ENCODE measurements at regions of chr7 and their contacts with region 1.

Region 1: DNA sequence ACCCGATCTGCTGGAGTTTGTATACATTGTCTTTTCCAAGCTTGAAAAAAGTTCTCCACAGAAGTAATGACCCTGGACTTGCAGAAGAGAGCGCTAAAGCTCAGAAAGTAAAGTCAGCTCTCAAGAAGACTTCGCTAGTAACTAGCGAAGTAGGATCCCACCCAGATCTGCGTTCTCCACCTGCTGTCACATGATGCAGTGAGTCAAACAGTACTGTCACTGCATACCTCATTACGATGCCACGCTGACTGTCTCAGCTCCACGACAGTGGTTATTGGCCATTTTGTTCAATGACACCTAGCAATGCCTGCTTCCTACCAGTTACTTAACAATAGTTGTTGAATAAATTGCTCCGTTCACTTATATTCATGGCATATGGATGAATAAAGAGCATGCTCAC is 29.7 kb upstream of the SEC61G start:
- DNase-seq: peak; percentile 87
- H3K4me3 ChIP-seq: no peak overlapping the region
- H3K27ac ChIP-seq: peak overlapping the region; percentile 43
- H3K4me1 ChIP-seq: peaks cover 22% of the 10 kb centered on the region
- H3K27me3 ChIP-seq: no peaks in the 10 kb centered on the region
- CTCF ChIP-seq: peak; percentile 75 to 83

Region 2: GRCh38 chr7:54252256-54253035 is 536.2 kb before region 1 on chr7:
- CTCF ChIA-PET with region 1: no interaction called
- dilution Hi-C with region 1: no loop called
- in situ Hi-C with region 1: no loop called
- intact Hi-C with region 1: no loop called
- DNase-seq: peak; percentile 32
- H3K4me3 ChIP-seq: no peak overlapping the region
- H3K27ac ChIP-seq: no peak overlapping the region
- H3K4me1 ChIP-seq: no peaks in the 10 kb centered on the region
- H3K27me3 ChIP-seq: no peaks in the 10 kb centered on the region
- CTCF ChIP-seq: no peak

Region 3: DNA sequence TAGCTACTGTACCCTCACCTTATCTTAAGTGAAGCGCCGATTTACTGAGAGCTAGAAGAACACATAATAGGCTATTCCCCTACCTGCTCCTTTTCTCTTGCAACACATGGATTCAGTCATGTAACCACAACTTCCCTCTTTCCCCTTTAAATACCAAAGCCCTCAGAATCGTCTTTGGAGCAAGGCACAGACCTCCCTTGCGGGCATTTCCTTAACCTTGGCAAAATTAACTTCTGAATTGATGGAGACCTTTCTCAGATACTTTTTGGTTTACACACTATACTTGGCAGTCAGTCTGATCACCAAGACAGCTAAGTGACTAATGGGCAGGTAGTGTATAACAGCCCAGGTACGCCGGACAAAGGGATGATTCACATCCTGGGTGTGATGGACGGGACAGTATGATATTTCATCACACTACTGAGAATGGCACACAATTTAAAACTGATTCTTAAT is 43.0 kb after region 1 on chr7:
- CTCF ChIA-PET with region 1: interaction called, 4 read pairs
- dilution Hi-C with region 1: loop called (anchors 5 kb)
- in situ Hi-C with region 1: loop called in 1 of 2 experiments (anchors 5 kb)
- intact Hi-C with region 1: loop called (anchors 2 kb)
- DNase-seq: peak; percentile 99
- H3K4me3 ChIP-seq: peak overlapping the region in 2 of 3 experiments; percentile 23 to 32
- H3K27ac ChIP-seq: peak overlapping the region; percentile 94
- H3K4me1 ChIP-seq: peaks cover 28% of the 10 kb centered on the region
- H3K27me3 ChIP-seq: no peaks in the 10 kb centered on the region
- CTCF ChIP-seq: no peak

Region 4: DNA sequence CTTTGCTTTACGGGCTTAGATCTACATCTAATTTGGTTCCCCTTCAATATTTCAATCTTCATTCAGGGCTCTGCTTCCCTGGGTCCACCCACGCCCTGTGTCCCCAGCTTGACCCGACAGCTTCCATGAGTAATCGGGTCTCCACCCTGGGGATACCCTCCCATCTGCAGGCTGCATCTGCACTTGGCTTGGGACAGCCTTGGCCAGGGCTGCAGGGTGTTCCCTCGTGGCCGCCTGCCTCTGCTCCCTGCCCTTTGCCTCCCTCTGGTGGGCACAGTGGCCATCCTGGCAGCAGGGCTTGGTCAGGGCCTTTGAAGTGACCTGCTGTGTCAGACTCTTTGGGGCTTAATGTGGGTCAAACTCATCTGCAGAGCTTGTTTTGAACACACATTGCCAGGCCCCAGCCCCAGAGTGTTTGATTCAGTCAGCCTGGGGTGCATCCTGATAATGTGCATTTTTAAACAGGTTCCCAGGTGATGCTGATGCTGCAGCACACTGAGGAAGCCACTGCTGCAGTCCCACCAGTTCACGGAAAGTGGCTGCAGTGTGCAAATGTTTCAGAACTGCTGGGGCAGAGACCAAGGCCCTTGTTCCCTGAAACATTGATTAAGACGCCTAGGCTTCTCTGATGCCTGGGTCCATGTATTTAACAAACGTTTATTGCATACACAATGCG is 51.0 kb after region 1 on chr7:
- CTCF ChIA-PET with region 1: interaction called, 7 read pairs
- dilution Hi-C with region 1: loop called (anchors 5 kb)
- in situ Hi-C with region 1: loop called in 1 of 2 experiments (anchors 5 kb)
- intact Hi-C with region 1: loop called (anchors 1 kb)
- DNase-seq: peak; percentile 73
- H3K4me3 ChIP-seq: no peak overlapping the region
- H3K27ac ChIP-seq: no peak overlapping the region
- H3K4me1 ChIP-seq: peaks cover 17% of the 10 kb centered on the region
- H3K27me3 ChIP-seq: no peaks in the 10 kb centered on the region
- CTCF ChIP-seq: peak; percentile 82 to 89

Region 5: DNA sequence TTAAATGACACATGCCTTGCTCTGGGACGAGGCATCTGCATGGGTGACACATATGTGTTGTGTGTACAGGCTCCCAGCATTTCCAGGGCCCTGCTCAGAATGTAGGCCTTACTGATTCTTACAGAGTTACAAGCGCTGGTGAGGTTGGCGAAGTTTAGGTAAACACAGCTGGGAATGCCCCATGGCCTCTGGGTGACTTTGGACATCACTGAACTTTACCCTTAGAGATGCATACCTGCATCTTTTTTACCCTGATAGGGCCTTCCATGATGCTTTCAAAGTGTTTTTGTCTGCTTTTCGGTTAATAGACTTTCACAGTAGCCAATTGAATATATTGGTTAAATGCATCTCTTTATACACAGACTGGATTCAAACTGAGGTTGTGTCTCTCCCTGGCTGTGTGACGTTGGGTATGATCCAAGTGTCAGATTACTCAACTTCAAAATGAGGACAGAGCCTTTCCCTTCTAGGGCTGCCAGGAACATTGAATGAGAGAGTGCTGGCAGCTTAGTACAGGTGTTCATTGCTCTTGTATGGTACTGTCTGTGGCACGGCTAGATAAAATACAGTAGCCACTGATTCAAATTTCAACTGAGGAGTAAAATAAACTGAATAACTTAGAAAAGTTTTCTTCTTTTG is 259.7 kb after region 1 on chr7:
- CTCF ChIA-PET with region 1: no interaction called
- dilution Hi-C with region 1: no loop called
- in situ Hi-C with region 1: loop called in 1 of 2 experiments (anchors 5 kb)
- intact Hi-C with region 1: no loop called
- DNase-seq: no peak
- H3K4me3 ChIP-seq: no peak overlapping the region
- H3K27ac ChIP-seq: peak overlapping the region; percentile 31
- H3K4me1 ChIP-seq: peaks cover 65% of the 10 kb centered on the region
- H3K27me3 ChIP-seq: no peaks in the 10 kb centered on the region
- CTCF ChIP-seq: no peak

Region 6: DNA sequence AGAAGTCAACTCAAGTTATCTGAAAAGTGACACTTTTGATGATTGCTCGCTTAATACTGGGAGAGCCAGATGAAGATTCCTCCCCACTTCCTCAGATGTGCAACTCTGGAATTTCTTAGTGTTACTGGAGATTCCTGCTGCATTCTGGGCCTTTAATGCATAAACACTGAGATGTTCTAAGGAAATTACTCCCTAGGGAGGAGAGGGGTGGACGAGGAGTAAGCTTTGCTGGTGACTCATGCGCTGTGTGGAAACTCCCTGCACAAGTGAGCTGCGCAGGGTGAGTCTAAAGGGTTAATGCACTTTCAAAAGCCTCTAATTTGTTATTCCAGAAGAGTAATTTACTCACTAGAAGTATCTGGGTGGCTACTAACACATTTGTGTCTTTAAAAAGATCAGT is 276.4 kb after region 1 on chr7:
- CTCF ChIA-PET with region 1: no interaction called
- dilution Hi-C with region 1: no loop called
- in situ Hi-C with region 1: no loop called
- intact Hi-C with region 1: loop called (anchors 5 kb)
- DNase-seq: peak; percentile 89
- H3K4me3 ChIP-seq: no peak overlapping the region
- H3K27ac ChIP-seq: peak overlapping the region; percentile 97
- H3K4me1 ChIP-seq: peaks cover 71% of the 10 kb centered on the region
- H3K27me3 ChIP-seq: no peaks in the 10 kb centered on the region
- CTCF ChIP-seq: no peak

Region 7: GRCh38 chr7:55206235-55207029 is 417.8 kb after region 1 on chr7:
- CTCF ChIA-PET with region 1: no interaction called
- dilution Hi-C with region 1: no loop called
- in situ Hi-C with region 1: no loop called
- intact Hi-C with region 1: no loop called
- DNase-seq: no peak
- H3K4me3 ChIP-seq: no peak overlapping the region
- H3K27ac ChIP-seq: no peak overlapping the region
- H3K4me1 ChIP-seq: no peaks in the 10 kb centered on the region
- H3K27me3 ChIP-seq: no peaks in the 10 kb centered on the region
- CTCF ChIP-seq: no peak

Region 8: DNA sequence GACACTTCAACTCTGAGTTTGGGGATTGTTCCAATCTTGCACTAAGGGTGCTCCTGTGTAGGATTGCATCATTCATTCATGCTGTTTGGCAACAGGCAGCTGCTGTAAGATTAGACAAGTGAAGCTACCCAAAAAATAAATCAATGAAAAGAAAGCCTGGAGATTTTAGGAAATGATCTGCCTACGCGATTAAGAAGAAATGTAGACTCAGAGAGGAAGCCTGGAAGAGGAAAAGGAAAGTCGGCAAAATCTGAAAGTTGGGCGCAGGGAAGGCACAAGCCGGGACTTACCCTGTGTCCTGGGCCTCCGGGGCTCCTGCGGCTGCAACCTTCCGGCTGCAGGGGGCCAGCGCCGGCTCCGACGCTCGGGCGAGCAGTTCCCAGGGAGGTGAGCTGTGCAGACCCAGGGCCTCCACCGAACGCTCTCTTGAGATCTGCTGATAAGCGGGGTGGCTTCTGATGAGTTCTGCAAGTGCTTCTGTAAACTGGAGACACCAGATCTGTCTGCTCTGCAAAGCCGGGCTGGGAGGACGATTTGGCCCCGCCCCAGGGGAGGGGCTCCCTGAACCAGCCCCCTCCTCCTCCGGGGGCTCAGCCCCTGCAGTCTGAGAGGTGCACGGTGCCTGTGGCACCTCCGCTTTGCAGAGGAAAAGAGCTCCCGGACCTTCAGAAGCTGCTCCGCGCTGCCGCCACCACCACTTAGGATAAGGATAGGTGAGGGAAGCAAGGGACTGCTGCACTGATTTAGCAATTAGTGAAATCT is 1245.2 kb after region 1 on chr7:
- CTCF ChIA-PET with region 1: no interaction called
- dilution Hi-C with region 1: no loop called
- in situ Hi-C with region 1: no loop called
- intact Hi-C with region 1: no loop called
- DNase-seq: peak; percentile 68
- H3K4me3 ChIP-seq: peak overlapping the region; percentile 63 to 65 (median 64)
- H3K27ac ChIP-seq: peak overlapping the region; percentile 64
- H3K4me1 ChIP-seq: no peaks in the 10 kb centered on the region
- H3K27me3 ChIP-seq: no peaks in the 10 kb centered on the region
- CTCF ChIP-seq: peak; percentile 9 to 50